Activated CD4-positive, alpha-beta T cell treated with anti-CD3 and anti-CD28 coated beads for 36 hours (primary cell): ENCODE measurements at regions of chr6 and their contacts with region 1.

Region 1: GRCh38 chr6:4936681-4937041 is 67.2 kb downstream of the RPP40 start:
- DNase-seq: no peak
- ATAC-seq: no peak
- H3K4me3 Mint-ChIP-seq: no peak overlapping the region
- H3K27ac Mint-ChIP-seq: no peak overlapping the region
- H3K4me1 Mint-ChIP-seq: peaks cover 55% of the 10 kb centered on the region
- H3K27me3 Mint-ChIP-seq: no peaks in the 10 kb centered on the region

Region 2: GRCh38 chr6:4788953-4789584 is 147.6 kb before region 1 on chr6:
- CTCF ChIA-PET with region 1: interaction called, 5 read pairs
- POLR2A ChIA-PET with region 1: no interaction called
- intact Hi-C with region 1: loop called in 1 of 2 experiments (anchors 5 kb)
- DNase-seq: no peak
- ATAC-seq: no peak
- H3K4me3 Mint-ChIP-seq: no peak overlapping the region
- H3K27ac Mint-ChIP-seq: no peak overlapping the region
- H3K4me1 Mint-ChIP-seq: peaks cover 61% of the 10 kb centered on the region
- H3K27me3 Mint-ChIP-seq: no peaks in the 10 kb centered on the region

Region 3: GRCh38 chr6:4870821-4871494 is 65.7 kb before region 1 on chr6:
- CTCF ChIA-PET with region 1: interaction called, 3 read pairs
- POLR2A ChIA-PET with region 1: interaction called, 3 read pairs
- intact Hi-C with region 1: loop called in 1 of 2 experiments (anchors 2 kb)
- DNase-seq: no peak
- ATAC-seq: no peak
- H3K4me3 Mint-ChIP-seq: no peak overlapping the region
- H3K27ac Mint-ChIP-seq: no peak overlapping the region
- H3K4me1 Mint-ChIP-seq: peaks cover 23% of the 10 kb centered on the region
- H3K27me3 Mint-ChIP-seq: no peaks in the 10 kb centered on the region

Region 4: DNA sequence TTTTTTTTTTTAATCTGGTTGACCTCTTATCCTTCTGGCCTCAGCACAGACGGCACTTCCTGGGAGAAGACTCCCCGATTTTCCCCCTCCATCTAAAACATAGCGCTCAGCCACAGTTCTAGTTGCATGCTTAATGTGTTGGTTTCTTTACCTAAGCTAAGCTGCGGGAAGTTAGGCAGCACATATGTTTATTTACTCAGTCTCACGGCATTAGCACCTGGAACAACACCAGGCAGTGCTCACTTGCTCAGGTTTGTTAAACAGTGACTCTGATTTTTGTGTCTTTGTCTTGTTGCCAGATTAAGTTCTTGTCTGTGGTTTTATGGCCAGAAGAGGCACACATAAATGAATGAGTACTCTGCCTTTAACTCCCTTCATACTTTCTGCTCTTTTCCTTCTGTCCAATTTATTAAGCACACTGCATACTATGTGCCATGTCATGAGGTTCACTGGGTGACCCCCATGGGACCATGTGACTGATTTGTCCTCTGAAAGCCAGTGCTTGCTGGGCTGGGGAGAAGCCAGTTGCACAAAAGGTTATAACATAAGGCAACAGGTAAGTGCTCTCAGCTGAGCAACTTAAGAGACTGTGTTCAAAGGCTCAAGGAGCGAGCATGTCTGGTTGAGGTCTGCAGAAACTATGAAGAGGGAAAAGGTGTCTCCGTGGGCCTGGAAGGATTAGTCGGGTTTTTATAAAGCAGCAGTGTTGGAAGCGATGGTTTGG is 26.5 kb before region 1 on chr6:
- CTCF ChIA-PET with region 1: no interaction called
- POLR2A ChIA-PET with region 1: no interaction called
- intact Hi-C with region 1: no loop called
- DNase-seq: no peak
- ATAC-seq: no peak
- H3K4me3 Mint-ChIP-seq: no peak overlapping the region
- H3K27ac Mint-ChIP-seq: no peak overlapping the region
- H3K4me1 Mint-ChIP-seq: peaks cover 50% of the 10 kb centered on the region
- H3K27me3 Mint-ChIP-seq: no peaks in the 10 kb centered on the region

Region 5: DNA sequence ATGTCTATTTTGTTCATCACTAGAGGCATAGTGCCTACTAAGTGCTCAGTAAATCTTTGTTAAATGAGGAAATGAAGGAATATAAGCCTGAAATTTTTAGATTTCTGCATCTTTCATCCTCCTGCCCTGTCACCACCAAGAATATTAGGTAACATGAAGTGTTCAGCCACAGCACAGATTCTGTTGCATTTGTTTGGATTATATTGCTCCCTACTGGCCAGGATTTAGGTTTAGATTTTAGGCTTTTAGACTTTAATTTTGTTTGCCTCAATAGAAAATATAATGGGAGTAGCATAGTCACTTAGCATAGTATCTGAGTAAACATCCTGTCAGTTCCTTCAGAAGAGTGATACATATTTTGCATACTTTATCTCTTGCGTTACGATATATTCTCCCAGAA is 338.8 kb after region 1 on chr6:
- CTCF ChIA-PET with region 1: no interaction called
- POLR2A ChIA-PET with region 1: no interaction called
- intact Hi-C with region 1: no loop called
- DNase-seq: no peak
- ATAC-seq: no peak
- H3K4me3 Mint-ChIP-seq: no peak overlapping the region
- H3K27ac Mint-ChIP-seq: peak overlapping the region; percentile 28
- H3K4me1 Mint-ChIP-seq: peaks cover 42% of the 10 kb centered on the region
- H3K27me3 Mint-ChIP-seq: no peaks in the 10 kb centered on the region